Heart right ventricle (tissue), 16 donors: ENCODE measurements at regions of chr10 and their contacts with region 1.

Region 1: DNA sequence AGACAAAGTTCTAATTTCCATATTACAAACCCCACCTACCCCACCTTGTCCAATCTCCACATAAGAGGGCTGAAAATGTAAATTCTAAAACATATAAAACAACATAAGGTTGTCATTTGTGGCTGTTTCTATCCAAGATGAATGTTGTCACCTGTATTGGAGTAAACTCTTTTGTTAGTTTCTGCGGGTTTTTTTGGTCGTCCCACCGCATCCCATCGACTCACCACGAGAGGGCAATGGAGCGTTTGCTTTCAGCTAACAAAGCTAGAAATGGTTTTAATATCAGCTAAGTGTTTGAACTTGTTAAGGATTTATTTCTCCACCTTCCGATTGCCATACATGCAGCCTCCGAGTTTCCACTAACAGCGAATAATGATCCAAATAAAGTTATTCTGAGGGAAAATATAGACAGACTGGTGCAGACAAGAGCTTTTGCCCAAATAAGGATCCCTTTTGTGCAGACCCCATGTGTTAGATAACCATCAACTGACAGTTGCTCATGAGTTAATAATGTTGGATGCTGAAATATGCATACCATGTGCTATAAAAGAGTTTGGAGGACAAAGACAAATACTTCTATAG is 137.2 kb downstream of the ARID5B start:
- DNase-seq: peak; percentile 63 to 86
- ATAC-seq: peak; percentile 53 to 78 (median 71)
- H3K4me3 ChIP-seq: peak overlapping the region in 8 of 10 donors; percentile 7 to 46 (median 26)
- H3K27ac ChIP-seq: peak overlapping the region in 5 of 10 donors; percentile 7 to 29 (median 24)
- H3K4me1 ChIP-seq: peaks cover 0 to 45% (median 36%) of the 10 kb centered on the region in 9 donors
- H3K27me3 ChIP-seq: no peaks in the 10 kb centered on the region
- CTCF ChIP-seq: peak; percentile 78 to 95 (median 86)

Region 2: DNA sequence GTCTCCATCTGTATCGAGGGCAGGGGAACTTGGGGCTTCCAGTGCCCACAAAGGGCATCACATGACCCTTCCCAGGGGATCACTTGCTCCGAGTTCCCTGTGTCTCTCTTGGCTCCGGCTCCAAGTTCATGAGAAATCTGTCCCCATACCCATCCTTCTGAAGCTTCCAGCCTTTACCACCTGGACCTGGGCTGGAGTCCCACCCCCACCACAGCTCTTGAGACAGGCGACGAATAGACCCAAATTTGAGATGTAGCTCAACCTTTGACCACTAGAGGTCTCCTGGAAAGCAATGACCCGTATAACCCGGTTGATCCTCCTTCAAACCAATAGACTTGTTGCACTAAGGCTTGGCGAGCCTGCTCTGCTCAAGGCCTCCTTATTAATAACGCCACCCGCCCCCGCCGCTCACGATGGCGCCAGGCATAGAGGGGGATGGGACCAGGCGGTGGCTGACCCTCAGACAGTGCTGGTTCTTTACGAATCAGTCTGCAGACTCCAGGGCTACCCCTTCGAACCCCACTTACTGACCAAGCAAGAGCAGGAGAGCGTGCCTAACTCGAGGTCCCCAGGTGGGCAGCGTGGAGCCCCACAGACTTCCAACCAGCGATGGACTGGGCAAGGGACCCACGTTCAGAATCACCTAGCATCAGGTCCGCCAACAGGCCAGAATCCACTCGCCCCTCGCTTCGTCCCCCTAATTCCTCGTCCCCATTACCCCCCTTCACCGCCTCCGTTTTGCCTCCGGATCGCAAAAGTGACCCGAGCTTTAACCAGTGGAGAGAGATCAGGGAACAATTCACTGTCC is 141.6 kb before region 1 on chr10:
- intact Hi-C with region 1: loop called in 6 of 10 experiments (anchors 2 to 10 kb)
- DNase-seq: peak; percentile 56 to 69
- ATAC-seq: peak; percentile 81 to 88 (median 84)
- H3K4me3 ChIP-seq: peak overlapping the region in 9 of 10 donors; percentile 30 to 56 (median 46)
- H3K27ac ChIP-seq: peak overlapping the region in 9 of 10 donors; percentile 25 to 84 (median 68)
- H3K4me1 ChIP-seq: peaks cover 3 to 36% (median 15%) of the 10 kb centered on the region in 9 donors
- H3K27me3 ChIP-seq: no peaks in the 10 kb centered on the region
- CTCF ChIP-seq: peak; percentile 37 to 78 (median 71)

Region 3: GRCh38 chr10:62199584-62199983 is 160.9 kb after region 1 on chr10:
- intact Hi-C with region 1: loop called in 3 of 10 experiments (anchors 1 to 5 kb)
- DNase-seq: no peak
- ATAC-seq: no peak
- H3K4me3 ChIP-seq: no peak overlapping the region
- H3K27ac ChIP-seq: no peak overlapping the region
- H3K4me1 ChIP-seq: peaks cover 0 to 3% (median 0%) of the 10 kb centered on the region in 9 donors
- H3K27me3 ChIP-seq: no peaks in the 10 kb centered on the region
- CTCF ChIP-seq: no peak

Region 4: GRCh38 chr10:62244780-62245467 is 206.2 kb after region 1 on chr10:
- intact Hi-C with region 1: loop called (anchors 1 to 5 kb)
- DNase-seq: peak in 1 of 2 donors; percentile 70
- ATAC-seq: peak; percentile 41 to 90 (median 84)
- H3K4me3 ChIP-seq: peak overlapping the region in 2 of 10 donors; percentile 12 to 41
- H3K27ac ChIP-seq: peak overlapping the region in 1 of 10 donors; percentile 78
- H3K4me1 ChIP-seq: peaks cover 0 to 32% (median 3%) of the 10 kb centered on the region in 9 donors
- H3K27me3 ChIP-seq: no peaks in the 10 kb centered on the region
- CTCF ChIP-seq: peak; percentile 70 to 95 (median 91)

Region 5: DNA sequence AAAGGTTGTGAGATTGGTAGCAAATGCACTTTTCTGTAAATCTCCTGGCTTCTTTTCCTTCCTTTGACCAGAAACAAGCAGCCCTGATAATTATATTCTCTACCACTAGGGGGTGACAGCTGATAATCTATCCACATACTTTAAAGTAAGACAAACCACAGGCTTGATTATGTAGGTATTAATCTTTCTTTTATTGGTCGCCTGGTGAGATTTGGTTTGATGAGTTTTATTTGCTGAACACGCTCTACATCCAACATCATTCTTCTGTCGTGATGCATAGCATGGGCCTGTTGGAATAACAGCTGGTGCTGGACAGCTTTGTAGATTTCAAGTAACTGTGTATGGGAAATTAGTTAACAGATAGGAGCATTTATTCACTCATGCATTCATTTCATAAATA is 399.0 kb after region 1 on chr10:
- intact Hi-C with region 1: loop called in 1 of 10 experiments (anchors 5 kb)
- DNase-seq: peak in 1 of 2 donors; percentile 29
- ATAC-seq: peak in 4 of 8 donors; percentile 56 to 69 (median 63)
- H3K4me3 ChIP-seq: no peak overlapping the region
- H3K27ac ChIP-seq: no peak overlapping the region
- H3K4me1 ChIP-seq: peaks cover 0 to 11% (median 0%) of the 10 kb centered on the region in 9 donors
- H3K27me3 ChIP-seq: peaks cover 0 to 7% (median 0%) of the 10 kb centered on the region in 7 donors
- CTCF ChIP-seq: peak; percentile 52 to 88 (median 74)